Mucosa of descending colon (tissue), 3 donors: ENCODE measurements at regions of chr7 and their contacts with region 1.

Region 1: GRCh38 chr7:1403638-1404459 is 55.4 kb downstream of the MICALL2 start:
- DNase-seq: no peak
- ATAC-seq: no peak
- H3K4me3 ChIP-seq: no peak overlapping the region
- H3K4me1 ChIP-seq: no peaks in the 10 kb centered on the region
- CTCF ChIP-seq: no peak

Region 2: DNA sequence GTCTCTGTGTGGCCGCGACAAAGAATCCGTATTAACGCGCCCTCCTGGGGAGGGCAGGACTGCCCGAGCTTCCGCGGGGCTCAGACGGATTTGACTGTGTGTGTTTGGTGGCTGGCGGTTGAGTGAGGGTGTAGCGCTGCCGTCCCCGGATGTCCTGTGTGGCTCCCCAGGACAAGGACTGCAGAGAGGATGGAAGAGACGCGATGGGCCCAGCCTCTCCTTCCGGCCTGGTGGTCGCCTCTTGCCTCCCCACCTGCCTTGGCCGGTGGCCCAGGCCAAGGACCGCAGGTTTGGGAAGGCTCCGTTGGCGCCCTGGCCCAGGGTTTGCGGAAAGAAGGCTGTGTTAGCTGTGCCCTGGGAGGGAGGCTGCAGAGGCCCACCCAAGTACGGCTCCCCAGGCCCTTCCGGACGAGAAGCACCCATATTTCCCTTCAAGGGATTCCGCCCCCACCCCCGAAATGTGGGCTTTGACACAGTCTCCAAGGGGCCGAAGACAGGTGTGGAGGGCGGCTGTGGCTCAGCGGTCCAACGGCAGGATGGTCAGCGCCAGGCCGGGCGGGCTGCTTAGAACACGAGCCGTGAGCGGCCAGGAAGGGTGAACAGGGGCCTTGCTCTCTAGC is 168.9 kb before region 1 on chr7:
- intact Hi-C with region 1: loop called in 1 of 2 experiments (anchors 10 kb)
- DNase-seq: no peak
- ATAC-seq: no peak
- H3K4me3 ChIP-seq: no peak overlapping the region
- H3K4me1 ChIP-seq: peaks cover 2% of the 10 kb centered on the region
- CTCF ChIP-seq: no peak

Region 3: GRCh38 chr7:1357601-1358271 is 46.1 kb before region 1 on chr7:
- intact Hi-C with region 1: no loop called
- DNase-seq: peak in 1 of 3 donors; percentile 40
- ATAC-seq: no peak
- H3K4me3 ChIP-seq: no peak overlapping the region
- H3K4me1 ChIP-seq: peaks cover 6% of the 10 kb centered on the region
- CTCF ChIP-seq: no peak